Endothelial cell of umbilical vein (primary cell): ENCODE measurements at regions of chr5 and their contacts with region 1.

Region 1: DNA sequence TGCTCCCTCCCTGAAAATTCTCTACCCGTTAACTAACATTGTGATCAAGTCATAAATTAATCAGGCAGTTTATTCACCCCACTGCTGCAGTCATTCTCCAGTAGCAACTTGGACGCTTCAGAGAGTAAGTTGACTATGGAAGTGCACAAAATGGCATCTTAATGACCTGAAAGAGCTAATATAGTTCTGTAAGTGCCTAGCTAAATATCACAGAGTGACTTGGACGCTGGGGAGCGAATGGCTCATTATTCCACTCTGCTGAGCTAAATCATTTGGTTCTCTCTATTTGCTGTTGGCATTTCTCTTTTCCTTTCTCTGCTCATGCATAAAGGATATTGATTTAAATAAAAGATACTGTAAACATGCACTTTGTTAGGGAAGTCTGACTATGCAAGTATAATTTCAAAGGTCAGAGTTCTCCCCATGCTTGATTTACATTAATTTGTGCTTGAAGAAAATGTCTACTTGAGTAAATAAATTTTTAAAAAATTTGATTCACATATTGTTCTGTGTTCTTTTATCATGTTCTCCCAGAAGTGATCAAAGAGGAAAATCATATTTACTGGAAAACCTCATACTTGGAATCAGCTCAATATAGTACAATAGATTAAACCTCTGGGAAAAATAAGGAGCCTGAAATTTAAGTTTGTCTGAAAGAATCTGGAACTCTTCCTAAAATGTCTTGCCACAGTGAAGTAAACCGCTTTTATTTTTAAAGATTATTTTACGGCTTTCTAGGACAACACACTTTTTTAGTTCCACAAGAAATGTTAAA is 169.5 kb upstream of the HAPLN1 start:
- DNase-seq: no peak
- H3K4me3 ChIP-seq: no peak overlapping the region
- H3K27ac ChIP-seq: no peak overlapping the region
- H3K4me1 ChIP-seq: no peaks in the 10 kb centered on the region
- H3K27me3 ChIP-seq: no peaks in the 10 kb centered on the region
- CTCF ChIP-seq: no peak
- POLR2A ChIP-seq: no peak

Region 2: DNA sequence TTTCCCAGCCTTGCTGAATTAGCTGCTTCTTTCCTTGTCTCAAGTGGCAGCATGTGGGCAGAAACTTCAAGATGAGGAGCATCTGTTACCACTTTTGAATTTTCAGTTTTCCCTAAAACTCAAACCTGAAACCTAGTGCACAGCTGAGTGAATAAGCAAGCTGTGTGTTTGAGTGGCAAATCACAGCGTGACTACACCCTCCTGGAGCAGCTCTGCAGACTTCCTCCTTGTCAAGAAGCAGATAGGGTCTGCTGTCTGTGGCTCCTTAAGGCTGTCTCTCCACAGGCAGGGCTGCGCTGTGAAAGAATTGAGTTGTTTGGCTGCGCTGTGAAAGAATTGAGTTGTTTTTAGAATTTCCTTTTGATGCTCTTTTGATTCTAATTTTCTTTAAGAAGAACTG is 10.1 kb after region 1 on chr5:
- CTCF ChIA-PET with region 1: interaction called, 10 read pairs
- POLR2A ChIA-PET with region 1: no interaction called
- dilution Hi-C with region 1: no loop called
- intact Hi-C with region 1: no loop called
- DNase-seq: no peak
- H3K4me3 ChIP-seq: no peak overlapping the region
- H3K27ac ChIP-seq: no peak overlapping the region
- H3K4me1 ChIP-seq: no peaks in the 10 kb centered on the region
- H3K27me3 ChIP-seq: no peaks in the 10 kb centered on the region
- CTCF ChIP-seq: no peak
- POLR2A ChIP-seq: no peak